Ascending aorta (tissue), 2 donors: ENCODE measurements at regions of chr1 and their contacts with region 1.

Region 1: GRCh38 chr1:43389326-43390313 is at the starts of genes MED8 and SZT2:
- DNase-seq: peak; percentile 93 to 99
- H3K4me3 ChIP-seq: peak within 1 kb of the TSS; percentile 79 to 92
- H3K27ac ChIP-seq: peak within 1 kb of the TSS; percentile 86 to 90
- H3K4me1 ChIP-seq: peaks cover 18 to 25% of the 10 kb centered on the region in 2 donors
- H3K27me3 ChIP-seq: no peaks in the 10 kb centered on the region
- CTCF ChIP-seq: no peak
- total RNA-seq, gene MED8: 15.3 TPM
- total RNA-seq, gene SZT2: 35.9 TPM

Region 2: DNA sequence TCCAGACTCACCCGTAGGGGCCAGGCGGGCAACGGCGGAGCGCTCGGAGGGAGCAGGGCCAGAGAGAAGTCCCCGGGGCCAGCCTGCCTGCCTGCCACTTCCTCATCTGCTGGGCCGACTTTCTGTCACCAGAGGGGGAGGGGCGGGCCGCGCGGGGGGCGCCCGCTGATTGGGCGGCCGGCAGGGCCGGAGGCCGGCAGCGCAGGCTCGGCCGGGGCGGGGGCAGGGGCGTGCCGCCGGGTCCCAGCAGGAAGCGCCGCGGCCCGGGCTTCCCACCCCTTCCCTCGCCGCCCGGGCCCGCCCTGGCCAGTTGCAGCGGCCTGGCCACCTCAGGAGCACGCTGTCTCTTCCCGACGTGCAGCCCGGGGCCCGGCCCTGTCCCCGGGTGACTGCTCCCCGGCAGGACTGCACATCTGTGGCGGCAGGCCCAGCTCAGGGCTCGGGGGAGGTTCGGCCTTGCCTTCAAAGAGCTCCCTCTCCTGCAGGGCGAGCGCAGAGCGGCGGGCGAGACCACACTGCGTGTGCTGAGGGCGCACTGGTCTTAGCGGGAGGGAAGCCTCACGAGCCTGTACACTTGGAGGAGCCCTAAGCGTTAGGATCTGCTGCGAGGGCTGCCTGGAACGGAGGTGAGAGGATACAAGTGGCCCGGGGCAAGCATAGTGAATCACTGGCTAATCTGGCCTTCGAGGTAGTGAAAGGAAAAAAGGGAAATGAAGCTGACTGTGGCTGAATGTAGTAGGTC is 21.5 kb before region 1 on chr1 and contains the start of gene ELOVL1:
- intact Hi-C with region 1: loop called (anchors 1 kb)
- DNase-seq: peak; percentile 70 to 96
- H3K4me3 ChIP-seq: peak within 1 kb of the TSS; percentile 96 to 97
- H3K27ac ChIP-seq: peak within 1 kb of the TSS; percentile 96
- H3K4me1 ChIP-seq: peaks cover 12 to 22% of the 10 kb centered on the region in 2 donors
- H3K27me3 ChIP-seq: no peaks in the 10 kb centered on the region
- CTCF ChIP-seq: peak in 2 of 3 experiments; percentile 11 to 26
- total RNA-seq, gene ELOVL1: 39.9 TPM

Region 3: GRCh38 chr1:43379476-43379875 is 10.1 kb before region 1 on chr1:
- intact Hi-C with region 1: no loop called
- DNase-seq: no peak
- H3K4me3 ChIP-seq: no peak overlapping the region
- H3K27ac ChIP-seq: no peak overlapping the region
- H3K4me1 ChIP-seq: no peaks in the 10 kb centered on the region
- H3K27me3 ChIP-seq: no peaks in the 10 kb centered on the region
- CTCF ChIP-seq: no peak

Region 4: GRCh38 chr1:43706598-43707495 is 317.2 kb after region 1 on chr1:
- intact Hi-C with region 1: no loop called
- DNase-seq: peak; percentile 69 to 94
- H3K4me3 ChIP-seq: peak overlapping the region; percentile 96 to 97
- H3K27ac ChIP-seq: peak overlapping the region in 1 of 2 donors; percentile 70
- H3K4me1 ChIP-seq: peaks cover 0 to 9% of the 10 kb centered on the region in 2 donors
- H3K27me3 ChIP-seq: no peaks in the 10 kb centered on the region
- CTCF ChIP-seq: no peak